Left colon (tissue), 2 donors: ENCODE measurements at regions of chr1 and their contacts with region 1.

Region 1: GRCh38 chr1:145978854-145979759 is 14.6 kb downstream of the POLR3GL start:
- DNase-seq: peak; percentile 89 to 98
- ATAC-seq: peak; percentile 84

Region 2: DNA sequence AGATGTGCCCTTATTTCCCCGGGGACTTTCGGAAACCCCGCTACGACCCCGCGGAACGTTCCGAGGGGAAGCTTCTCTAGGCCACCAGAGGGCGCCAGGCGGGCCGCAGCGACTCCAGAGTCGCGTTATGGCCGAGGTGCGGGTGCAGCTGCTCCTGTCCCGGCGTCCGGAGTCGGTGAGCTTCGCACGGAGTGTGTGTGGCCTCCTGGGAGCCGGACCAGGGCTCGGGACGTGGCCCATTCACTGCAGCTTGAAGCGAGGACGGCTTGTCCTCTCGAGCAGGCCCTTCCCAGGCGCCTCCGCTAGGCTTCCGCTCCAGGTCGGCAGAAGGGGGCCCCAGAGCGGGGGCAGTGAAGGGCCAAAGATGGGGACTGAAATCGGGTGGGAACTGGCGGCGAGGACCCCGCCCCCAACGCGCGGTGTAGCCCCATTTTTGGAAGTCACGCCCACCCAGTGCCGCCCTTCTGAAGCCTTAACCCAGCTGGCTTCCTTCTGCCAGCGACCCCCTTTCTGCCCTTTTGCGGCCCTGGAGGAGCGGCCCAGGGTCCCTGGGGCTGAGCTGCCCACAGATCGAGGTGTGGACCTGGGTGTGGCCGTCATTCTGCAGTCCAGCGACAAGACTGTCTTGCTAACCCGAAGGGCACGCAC is 133.5 kb before region 1 on chr1 and contains the start of gene NUDT17:
- intact Hi-C with region 1: no loop called
- DNase-seq: peak; percentile 72 to 87
- ATAC-seq: peak; percentile 88
- total RNA-seq, gene NUDT17: 1.3 TPM

Region 3: GRCh38 chr1:146012737-146013403 is 33.8 kb after region 1 on chr1:
- intact Hi-C with region 1: loop called in 1 of 2 experiments (anchors 5 kb)
- DNase-seq: no peak
- ATAC-seq: peak; percentile 74